ENCODE measurements at regions of chr5 and their contacts with region 1.

Region 1: GRCh38 chr5:56200856-56201666 is 32.1 kb downstream of the ANKRD55 start:
- DNase-seq: peak; percentile 71 to 88 (median 83)
- H3K4me3 ChIP-seq: no peak overlapping the region
- H3K27ac ChIP-seq: no peak overlapping the region
- H3K4me1 ChIP-seq: peaks cover 0 to 5% of the 10 kb centered on the region in 2 donors
- H3K27me3 ChIP-seq: no peaks in the 10 kb centered on the region
- CTCF ChIP-seq: peak; percentile 49 to 94 (median 85)
- POLR2A ChIP-seq: no peak

Region 2: DNA sequence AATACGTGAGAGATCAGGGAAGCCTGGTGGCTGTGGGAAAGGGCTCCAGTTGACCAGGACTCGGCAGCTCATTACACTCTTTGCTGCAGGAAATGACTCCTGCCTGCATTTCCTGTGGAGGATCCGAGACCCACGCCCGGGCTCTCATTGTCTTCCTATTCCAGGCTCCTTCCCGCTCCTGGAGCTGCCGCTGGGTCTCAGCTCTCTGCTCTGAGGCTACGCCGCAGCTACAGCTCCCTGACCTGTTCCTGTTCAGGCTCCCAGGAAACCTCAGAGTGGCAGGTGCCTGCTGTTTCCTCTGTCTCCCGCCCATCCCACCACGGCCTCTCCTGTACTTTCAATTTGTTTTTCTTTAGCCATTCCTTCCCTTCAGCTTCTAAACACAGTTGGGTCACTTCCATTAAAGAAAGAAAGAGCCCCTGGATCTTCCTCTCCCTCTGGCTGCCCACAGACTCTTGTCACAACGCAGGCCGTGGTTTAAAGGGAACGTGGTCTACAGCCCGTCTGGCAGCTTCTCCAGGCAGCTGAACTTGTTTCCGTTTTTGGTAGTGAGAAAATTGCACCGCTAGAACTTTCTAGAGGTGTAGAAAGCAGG is 277.8 kb before region 1 on chr5:
- intact Hi-C with region 1: loop called in 1 of 2 experiments (anchors 10 kb)
- DNase-seq: peak in 3 of 7 donors; percentile 22 to 36 (median 25)
- H3K4me3 ChIP-seq: peak overlapping the region in 1 of 4 donors; percentile 36
- H3K27ac ChIP-seq: peak overlapping the region in 2 of 5 donors; percentile 13 to 54
- H3K4me1 ChIP-seq: no peaks in the 10 kb centered on the region
- H3K27me3 ChIP-seq: no peaks in the 10 kb centered on the region
- CTCF ChIP-seq: no peak
- POLR2A ChIP-seq: no peak

Region 3: GRCh38 chr5:55988979-55989638 is 212.0 kb before region 1 on chr5:
- intact Hi-C with region 1: loop called in 1 of 2 experiments (anchors 5 kb)
- DNase-seq: no peak
- H3K4me3 ChIP-seq: peak overlapping the region in 1 of 4 donors; percentile 32
- H3K27ac ChIP-seq: no peak overlapping the region
- H3K4me1 ChIP-seq: peaks cover 28 to 77% of the 10 kb centered on the region in 2 donors
- H3K27me3 ChIP-seq: no peaks in the 10 kb centered on the region
- CTCF ChIP-seq: no peak
- POLR2A ChIP-seq: no peak

Region 4: GRCh38 chr5:56070851-56071465 is 130.1 kb before region 1 on chr5:
- intact Hi-C with region 1: loop called in 1 of 2 experiments (anchors 10 kb)
- DNase-seq: no peak
- H3K4me3 ChIP-seq: peak overlapping the region in 1 of 4 donors; percentile 16
- H3K27ac ChIP-seq: peak overlapping the region in 4 of 5 donors; percentile 27 to 62 (median 30)
- H3K4me1 ChIP-seq: peaks cover 14 to 37% of the 10 kb centered on the region in 2 donors
- H3K27me3 ChIP-seq: no peaks in the 10 kb centered on the region
- CTCF ChIP-seq: no peak
- POLR2A ChIP-seq: no peak

Region 5: DNA sequence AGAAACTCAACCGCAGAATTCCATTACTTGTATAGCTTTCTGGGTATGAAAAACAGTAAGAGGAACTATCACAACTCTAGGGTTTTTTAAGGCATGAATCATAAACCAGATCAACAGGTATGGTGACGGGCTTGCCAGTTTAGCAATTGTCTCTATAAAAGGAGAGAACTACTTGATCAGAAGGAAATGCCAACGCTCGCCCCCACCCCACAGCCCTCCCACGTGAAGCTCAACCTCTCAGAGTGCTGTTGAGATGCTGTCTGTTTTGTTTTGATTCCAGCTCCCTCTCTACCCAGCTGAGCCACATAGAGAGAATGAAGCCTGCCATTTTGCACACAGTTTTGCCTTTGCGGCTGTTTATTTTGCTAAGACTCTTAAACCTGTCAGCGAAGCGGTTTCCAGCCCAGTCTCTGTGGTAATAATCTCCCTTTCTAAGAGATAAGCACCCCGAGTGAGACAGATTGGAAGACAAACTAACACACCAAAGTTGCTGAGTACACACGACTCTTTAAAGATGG is 289.9 kb after region 1 on chr5:
- intact Hi-C with region 1: no loop called
- DNase-seq: no peak
- H3K4me3 ChIP-seq: no peak overlapping the region
- H3K27ac ChIP-seq: no peak overlapping the region
- H3K4me1 ChIP-seq: peaks cover 5 to 7% of the 10 kb centered on the region in 2 donors
- H3K27me3 ChIP-seq: no peaks in the 10 kb centered on the region
- CTCF ChIP-seq: no peak
- POLR2A ChIP-seq: no peak

Measured in adrenal gland (tissue), 19 donors.